RWPE1 (cell line): ENCODE measurements at regions of chr1 and their contacts with region 1.

Region 1: GRCh38 chr1:206050655-206051235 is 2.2 kb upstream of the RHEX start:
- DNase-seq: no peak
- H3K27ac ChIP-seq: no peak overlapping the region
- CTCF ChIP-seq: no peak

Region 2: GRCh38 chr1:205693421-205693991 is 357.2 kb before region 1 on chr1:
- CTCF ChIA-PET with region 1: no interaction called
- POLR2A ChIA-PET with region 1: no interaction called
- DNase-seq: no peak
- H3K27ac ChIP-seq: no peak overlapping the region
- CTCF ChIP-seq: no peak

Region 3: DNA sequence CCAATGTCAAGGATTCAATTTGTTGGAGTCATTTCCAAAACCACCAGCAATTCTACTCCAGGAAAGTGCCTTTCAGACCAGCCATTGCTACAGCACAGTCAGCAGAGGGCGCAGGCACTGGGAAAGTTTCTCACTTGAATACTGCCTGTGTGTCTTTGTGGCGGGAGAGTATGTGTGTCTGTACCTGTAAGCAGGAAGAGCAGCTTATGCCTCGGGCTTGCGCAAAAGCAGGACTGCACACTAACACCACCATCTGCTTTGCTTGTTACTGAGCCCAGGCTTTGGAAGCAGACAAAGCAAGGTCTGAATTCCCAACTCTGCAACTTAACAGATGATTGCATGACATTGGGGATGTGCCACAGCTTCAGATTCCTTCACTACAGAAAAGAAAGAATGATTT is 20.0 kb before region 1 on chr1:
- CTCF ChIA-PET with region 1: interaction called, 10 read pairs
- POLR2A ChIA-PET with region 1: no interaction called
- DNase-seq: peak; percentile 83
- H3K27ac ChIP-seq: peak overlapping the region; percentile 48
- CTCF ChIP-seq: peak; percentile 87

Region 4: DNA sequence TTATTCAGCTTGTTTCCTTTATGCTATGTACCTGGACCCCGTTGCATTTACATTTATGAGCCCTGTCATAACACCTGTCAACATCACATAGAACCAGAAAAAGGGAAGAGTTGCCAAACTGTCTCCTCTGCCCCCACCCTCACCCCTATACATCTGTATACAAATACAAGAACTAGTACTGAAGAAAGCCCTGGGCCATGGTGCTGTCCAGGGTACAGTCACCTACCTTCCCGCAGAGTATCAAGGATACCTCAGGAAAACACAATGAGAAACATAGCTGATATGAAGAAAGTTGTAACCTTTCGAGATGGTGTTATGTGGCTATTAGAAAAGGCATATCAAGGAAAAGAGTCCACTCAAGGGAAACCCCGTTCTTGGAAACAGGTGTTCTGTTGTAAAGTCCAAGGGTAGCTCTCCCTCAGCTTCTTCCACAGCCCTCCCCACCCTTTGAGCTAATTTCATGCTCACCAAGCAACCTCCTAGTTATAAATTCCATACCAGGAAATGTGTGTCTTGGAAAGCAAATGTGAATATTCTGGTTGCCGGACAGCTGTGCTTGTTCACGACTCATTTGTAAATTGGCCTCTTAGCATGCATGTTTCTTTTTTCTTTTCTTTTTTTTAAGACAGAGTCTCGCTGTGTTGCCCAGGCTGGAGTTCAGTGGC is 83.1 kb after region 1 on chr1:
- CTCF ChIA-PET with region 1: interaction called, 10 read pairs
- POLR2A ChIA-PET with region 1: no interaction called
- DNase-seq: no peak
- H3K27ac ChIP-seq: no peak overlapping the region
- CTCF ChIP-seq: no peak